Activated CD8-positive, alpha-beta T cell treated with anti-CD3 and anti-CD28 coated beads for 36 hours (primary cell): ENCODE measurements at regions of chr10 and their contacts with region 1.

Region 1: GRCh38 chr10:28381903-28382347 is 79.1 kb upstream of the MPP7 start:
- DNase-seq: peak; percentile 95
- ATAC-seq: peak; percentile 95
- H3K4me3 Mint-ChIP-seq: no peak overlapping the region
- H3K27ac Mint-ChIP-seq: no peak overlapping the region
- H3K4me1 Mint-ChIP-seq: peaks cover 28% of the 10 kb centered on the region
- H3K27me3 Mint-ChIP-seq: no peaks in the 10 kb centered on the region
- CTCF ChIP-seq: peak; percentile 92

Region 2: GRCh38 chr10:28241741-28242399 is 140.1 kb before region 1 on chr10:
- CTCF ChIA-PET with region 1: interaction called, 202 read pairs
- POLR2A ChIA-PET with region 1: no interaction called
- intact Hi-C with region 1: no loop called
- DNase-seq: peak; percentile 65
- ATAC-seq: peak; percentile 83
- H3K4me3 Mint-ChIP-seq: no peak overlapping the region
- H3K27ac Mint-ChIP-seq: no peak overlapping the region
- H3K4me1 Mint-ChIP-seq: peaks cover 27% of the 10 kb centered on the region
- H3K27me3 Mint-ChIP-seq: no peaks in the 10 kb centered on the region
- CTCF ChIP-seq: peak; percentile 93

Region 3: GRCh38 chr10:28284123-28284522 is 97.8 kb before region 1 on chr10:
- CTCF ChIA-PET with region 1: interaction called, 10 read pairs
- POLR2A ChIA-PET with region 1: interaction called, 3 read pairs
- intact Hi-C with region 1: no loop called
- DNase-seq: no peak
- ATAC-seq: no peak
- H3K4me3 Mint-ChIP-seq: no peak overlapping the region
- H3K27ac Mint-ChIP-seq: no peak overlapping the region
- H3K4me1 Mint-ChIP-seq: peaks cover 32% of the 10 kb centered on the region
- H3K27me3 Mint-ChIP-seq: no peaks in the 10 kb centered on the region
- CTCF ChIP-seq: no peak

Region 4: DNA sequence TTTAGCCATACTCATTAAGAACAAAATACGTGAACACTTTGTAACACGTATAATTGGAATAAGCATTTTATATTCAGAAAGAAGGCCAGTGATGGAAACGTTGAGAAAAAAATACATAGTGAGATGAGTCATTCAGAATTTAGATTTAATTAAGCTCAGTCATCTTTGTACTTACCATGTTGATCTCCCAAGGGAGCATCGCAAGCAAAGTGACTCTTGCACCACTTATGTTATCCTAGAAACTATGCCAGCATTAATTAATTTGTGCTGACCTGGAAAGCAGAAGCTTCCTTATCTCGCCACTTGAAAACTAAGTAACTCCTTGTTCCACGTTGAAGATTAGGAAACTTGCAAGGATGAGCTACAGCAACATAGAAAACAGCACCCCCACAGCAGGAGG is 69.4 kb before region 1 on chr10:
- CTCF ChIA-PET with region 1: interaction called, 36 read pairs
- POLR2A ChIA-PET with region 1: no interaction called
- intact Hi-C with region 1: no loop called
- DNase-seq: no peak
- ATAC-seq: no peak
- H3K4me3 Mint-ChIP-seq: no peak overlapping the region
- H3K27ac Mint-ChIP-seq: no peak overlapping the region
- H3K4me1 Mint-ChIP-seq: peaks cover 22% of the 10 kb centered on the region
- H3K27me3 Mint-ChIP-seq: no peaks in the 10 kb centered on the region
- CTCF ChIP-seq: no peak

Region 5: DNA sequence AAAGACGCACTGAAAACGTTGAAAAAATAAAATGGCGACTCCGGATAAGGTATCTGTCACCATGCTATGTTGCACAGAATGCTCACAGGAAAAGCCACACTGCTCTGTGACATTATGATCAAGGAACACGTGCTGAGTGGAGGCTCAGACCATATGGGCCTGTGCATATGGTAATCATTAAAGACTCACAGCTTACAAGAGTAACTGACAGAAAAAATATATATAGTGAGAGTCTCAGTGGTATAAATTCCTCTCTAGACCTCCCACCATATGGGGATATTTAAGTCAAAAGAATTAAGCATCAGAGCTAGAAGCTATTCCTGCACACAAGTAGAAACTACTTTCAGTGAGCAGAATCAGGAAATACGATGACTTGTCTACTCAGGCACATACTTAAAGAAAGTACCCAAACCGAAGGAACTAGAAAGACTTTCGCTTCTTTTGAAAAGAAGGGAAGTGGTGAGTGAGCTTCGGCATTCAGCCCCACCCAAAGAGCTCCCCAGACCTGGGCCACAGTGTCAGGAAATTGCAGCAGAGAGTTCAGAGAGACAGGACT is 13.9 kb before region 1 on chr10:
- CTCF ChIA-PET with region 1: interaction called, 62 read pairs
- POLR2A ChIA-PET with region 1: interaction called, 3 read pairs
- intact Hi-C with region 1: no loop called
- DNase-seq: peak; percentile 75
- ATAC-seq: peak; percentile 93
- H3K4me3 Mint-ChIP-seq: peak overlapping the region; percentile 54
- H3K27ac Mint-ChIP-seq: peak overlapping the region; percentile 91
- H3K4me1 Mint-ChIP-seq: peaks cover 34% of the 10 kb centered on the region
- H3K27me3 Mint-ChIP-seq: no peaks in the 10 kb centered on the region
- CTCF ChIP-seq: no peak